Right ventricle myocardium inferior (tissue), 1 donor: ENCODE measurements at regions of chr2 and their contacts with region 1.

Region 1: GRCh38 chr2:228056293-228057097 is 125.0 kb downstream of the SPHKAP start:
- DNase-seq: no peak
- ATAC-seq: no peak

Region 2: GRCh38 chr2:228167290-228167689 is 110.8 kb after region 1 on chr2:
- intact Hi-C with region 1: loop called (anchors 5 kb)
- DNase-seq: no peak
- ATAC-seq: no peak

Region 3: GRCh38 chr2:228329282-228329681 is 272.8 kb after region 1 on chr2:
- intact Hi-C with region 1: loop called (anchors 10 kb)
- DNase-seq: no peak
- ATAC-seq: peak; percentile 88

Region 4: DNA sequence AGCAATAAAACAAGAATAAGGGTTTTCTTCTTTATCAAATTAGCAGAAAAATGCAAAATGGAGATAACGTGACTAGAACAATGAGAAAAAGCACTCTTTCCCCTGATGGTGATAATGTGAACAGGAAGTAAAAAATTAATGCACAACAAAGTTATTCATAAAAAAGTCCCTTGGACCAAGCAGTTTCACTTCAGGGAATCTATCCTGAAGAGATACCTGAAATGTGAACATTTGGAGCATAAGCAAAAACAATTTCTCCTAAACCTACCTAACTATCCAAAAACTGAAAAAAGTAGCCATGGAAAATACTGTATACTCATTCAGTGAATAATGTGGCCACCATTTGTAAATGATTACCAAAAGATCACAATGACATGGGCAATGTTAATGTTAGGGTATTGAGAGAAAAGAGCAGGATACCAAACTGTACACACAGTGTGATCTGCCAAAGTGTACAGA is 1816.7 kb after region 1 on chr2:
- intact Hi-C with region 1: no loop called
- DNase-seq: no peak
- ATAC-seq: no peak